Panc1 (cell line): ENCODE measurements at regions of chr1 and their contacts with region 1.

Region 1: DNA sequence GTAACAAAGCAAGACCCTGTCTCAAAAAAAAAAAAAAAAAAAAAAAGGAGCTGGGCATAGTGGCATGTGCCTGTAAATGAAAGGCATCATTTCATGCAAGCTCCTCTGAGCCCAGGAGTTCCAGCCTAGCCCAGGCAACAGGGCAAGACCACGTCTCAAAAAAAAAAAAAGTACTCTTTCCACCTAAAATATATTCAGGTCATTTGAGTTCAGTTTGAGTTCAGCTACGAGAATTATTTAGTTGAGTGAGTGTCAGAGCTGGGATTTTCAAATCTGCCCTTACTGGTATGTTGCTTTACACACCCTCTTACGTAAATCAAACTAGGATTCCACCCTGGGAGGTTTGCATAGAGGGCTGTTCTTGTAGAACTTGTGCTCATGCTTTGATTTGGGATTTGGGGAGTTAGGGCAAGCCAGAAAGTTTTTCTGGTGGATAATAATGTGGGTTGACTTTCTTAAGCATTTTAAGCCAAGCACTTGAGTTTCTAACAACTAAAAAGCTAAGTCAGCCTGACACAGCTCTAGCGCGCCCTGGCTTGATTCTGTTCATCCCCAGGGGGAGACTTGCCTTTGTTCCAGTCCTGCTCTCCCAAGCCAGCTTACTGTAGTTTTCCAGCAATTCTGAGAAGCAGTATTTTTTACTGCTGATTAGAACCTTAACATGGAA is 11.3 kb upstream of the PGD start:
- DNase-seq: no peak
- ATAC-seq: peak; percentile 66; the same call in 1 of the 2 replicates
- H3K4me3 ChIP-seq: no peak overlapping the region
- H3K27ac ChIP-seq: no peak overlapping the region
- H3K4me1 ChIP-seq: peaks cover 5% of the 10 kb centered on the region
- H3K27me3 ChIP-seq: no peaks in the 10 kb centered on the region
- CTCF ChIP-seq: no peak

Region 2: DNA sequence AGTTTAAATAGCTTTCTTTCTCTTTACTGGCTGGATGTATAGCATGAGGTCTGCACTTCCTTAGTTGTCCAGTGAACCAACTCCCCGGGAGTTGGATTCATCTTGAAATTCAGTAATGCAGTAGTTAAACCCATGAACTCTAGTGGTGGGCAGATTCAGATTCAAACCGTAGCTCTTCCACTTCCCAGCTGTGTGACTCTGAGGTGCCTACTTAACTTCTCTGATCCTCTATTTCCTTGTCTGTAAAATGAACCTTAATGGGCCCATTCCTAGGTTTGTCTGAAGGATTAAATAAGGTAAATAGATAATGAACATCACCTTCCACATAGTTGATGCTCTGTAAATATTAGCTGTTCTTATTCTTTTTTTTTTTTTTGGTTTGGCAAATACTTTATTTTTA is 719.5 kb before region 1 on chr1:
- CTCF ChIA-PET with region 1: no interaction called
- POLR2A ChIA-PET with region 1: interaction called, 15 read pairs
- in situ Hi-C with region 1: no loop called
- intact Hi-C with region 1: no loop called
- DNase-seq: no peak
- ATAC-seq: no peak
- H3K4me3 ChIP-seq: no peak overlapping the region
- H3K27ac ChIP-seq: no peak overlapping the region
- H3K4me1 ChIP-seq: no peaks in the 10 kb centered on the region
- H3K27me3 ChIP-seq: no peaks in the 10 kb centered on the region
- CTCF ChIP-seq: no peak

Region 3: DNA sequence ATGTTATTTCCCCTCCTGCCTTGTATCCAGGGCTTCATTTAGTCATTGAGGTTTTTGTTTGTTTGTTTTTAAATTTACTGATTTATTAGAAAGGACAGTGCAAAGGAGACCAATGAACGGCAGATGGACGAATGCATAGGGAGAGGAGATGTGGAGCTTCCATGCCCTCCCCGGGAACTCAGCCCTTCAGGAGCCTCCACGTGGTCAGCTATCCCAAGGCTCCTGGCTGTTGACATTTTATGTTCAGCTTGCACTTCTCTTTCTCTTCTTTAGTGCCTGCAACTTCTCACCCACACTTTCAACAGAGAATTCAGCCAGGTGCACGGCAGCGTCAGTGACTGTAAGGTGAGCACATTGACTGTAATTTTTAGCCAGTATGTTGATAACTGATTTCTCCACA is 19.4 kb before region 1 on chr1:
- CTCF ChIA-PET with region 1: interaction called, 11 read pairs
- POLR2A ChIA-PET with region 1: interaction called, 5 read pairs
- in situ Hi-C with region 1: no loop called
- intact Hi-C with region 1: no loop called
- DNase-seq: no peak
- ATAC-seq: no peak
- H3K4me3 ChIP-seq: no peak overlapping the region
- H3K27ac ChIP-seq: no peak overlapping the region
- H3K4me1 ChIP-seq: no peaks in the 10 kb centered on the region
- H3K27me3 ChIP-seq: no peaks in the 10 kb centered on the region
- CTCF ChIP-seq: no peak